OCI-LY7 (cell line): ENCODE measurements at regions of chr6 and their contacts with region 1.

Region 1: DNA sequence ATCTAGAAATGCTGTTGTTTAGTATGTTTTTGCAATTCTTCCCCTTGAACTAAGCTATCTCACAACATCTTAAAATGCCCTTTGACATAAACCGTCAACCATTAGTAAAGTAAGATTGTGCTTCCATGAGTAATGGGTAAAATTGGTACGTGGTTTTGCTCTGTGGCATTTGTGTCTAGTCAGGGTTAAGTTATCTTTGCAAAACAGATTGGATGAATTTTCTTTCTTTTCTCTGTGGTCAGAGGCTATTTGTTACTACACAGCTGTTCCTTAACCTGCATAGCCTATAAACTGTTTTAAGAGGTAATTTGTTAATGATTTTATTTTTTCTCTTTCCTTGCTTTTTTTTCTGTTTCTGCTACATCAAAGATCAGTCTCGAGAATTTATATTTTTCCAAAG is 75.4 kb downstream of the RPP40 start:
- DNase-seq: no peak
- H3K4me3 ChIP-seq: no peak overlapping the region
- H3K27ac ChIP-seq: no peak overlapping the region
- H3K4me1 ChIP-seq: no peaks in the 10 kb centered on the region
- CTCF ChIP-seq: no peak

Region 2: DNA sequence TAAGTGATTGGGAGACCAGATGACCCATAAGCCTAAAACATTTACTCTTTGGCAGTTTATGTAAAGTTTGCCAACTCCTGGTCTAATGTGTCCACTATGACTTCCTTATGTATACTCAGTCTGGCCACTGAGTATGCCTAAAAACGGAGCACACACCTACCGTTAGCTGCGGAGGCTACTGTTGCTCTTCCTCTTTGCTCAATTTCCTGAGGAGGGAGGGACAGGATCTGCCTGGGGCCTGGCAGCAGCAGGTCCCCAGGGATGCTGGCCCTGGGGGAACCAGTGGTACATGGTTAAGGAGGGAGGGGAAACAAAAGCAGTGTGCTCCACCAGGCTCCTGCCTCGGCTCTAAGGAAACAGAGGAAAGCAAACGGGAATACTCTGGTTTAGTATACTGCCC is 38.7 kb before region 1 on chr6:
- CTCF ChIA-PET with region 1: no interaction called
- POLR2A ChIA-PET with region 1: interaction called, 11 read pairs
- intact Hi-C with region 1: no loop called
- DNase-seq: no peak
- H3K4me3 ChIP-seq: no peak overlapping the region
- H3K27ac ChIP-seq: no peak overlapping the region
- H3K4me1 ChIP-seq: peaks cover 43% of the 10 kb centered on the region
- CTCF ChIP-seq: no peak